BJ (cell line): ENCODE measurements at regions of chr6 and their contacts with region 1.

Region 1: DNA sequence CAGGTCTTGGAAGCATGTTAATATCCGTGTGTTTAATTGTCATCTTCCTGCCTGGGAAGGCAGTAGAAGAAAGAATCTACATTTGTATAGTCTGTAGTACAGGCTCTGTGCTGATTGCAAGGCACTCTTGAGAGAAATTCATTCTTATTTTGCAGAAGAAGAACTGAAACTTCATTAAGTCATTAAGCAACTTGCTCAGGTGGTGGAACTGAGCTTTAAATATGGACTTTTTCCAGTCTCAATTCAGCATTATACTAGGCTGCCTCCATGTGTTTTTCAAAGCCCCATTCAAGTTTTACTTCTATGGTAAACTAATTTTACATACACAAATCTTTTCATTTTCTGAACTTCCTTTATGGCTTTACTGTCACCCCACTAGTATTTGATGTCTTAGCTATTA is 18.7 kb downstream of the ZNF451 start:
- DNase-seq: no peak
- H3K4me3 ChIP-seq: no peak overlapping the region
- H3K27me3 ChIP-seq: no peaks in the 10 kb centered on the region
- CTCF ChIP-seq: no peak

Region 2: DNA sequence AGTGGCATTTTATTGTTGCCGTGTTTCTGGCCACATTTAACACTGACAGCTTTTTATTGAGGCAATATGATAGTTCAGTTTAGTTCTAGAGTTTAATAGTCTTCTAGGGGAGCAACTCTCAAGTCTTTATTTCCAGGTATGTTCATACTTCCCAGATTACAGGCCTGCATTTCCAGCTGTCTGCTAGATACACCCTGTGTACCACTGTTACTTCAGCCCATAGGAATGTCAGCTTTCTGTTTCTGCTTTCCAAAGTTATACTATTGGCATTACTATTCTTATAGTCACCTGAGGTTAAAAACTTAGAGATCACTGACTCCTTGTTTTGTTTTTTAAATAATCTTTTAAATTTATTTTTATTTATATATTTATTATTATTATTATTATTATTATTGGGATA is 11.1 kb before region 1 on chr6:
- CTCF ChIA-PET with region 1: no interaction called
- POLR2A ChIA-PET with region 1: interaction called, 19 read pairs
- DNase-seq: no peak
- H3K4me3 ChIP-seq: no peak overlapping the region
- H3K27me3 ChIP-seq: no peaks in the 10 kb centered on the region
- CTCF ChIP-seq: no peak